ENCODE measurements at regions of chr2 and their contacts with region 1.

Region 1: DNA sequence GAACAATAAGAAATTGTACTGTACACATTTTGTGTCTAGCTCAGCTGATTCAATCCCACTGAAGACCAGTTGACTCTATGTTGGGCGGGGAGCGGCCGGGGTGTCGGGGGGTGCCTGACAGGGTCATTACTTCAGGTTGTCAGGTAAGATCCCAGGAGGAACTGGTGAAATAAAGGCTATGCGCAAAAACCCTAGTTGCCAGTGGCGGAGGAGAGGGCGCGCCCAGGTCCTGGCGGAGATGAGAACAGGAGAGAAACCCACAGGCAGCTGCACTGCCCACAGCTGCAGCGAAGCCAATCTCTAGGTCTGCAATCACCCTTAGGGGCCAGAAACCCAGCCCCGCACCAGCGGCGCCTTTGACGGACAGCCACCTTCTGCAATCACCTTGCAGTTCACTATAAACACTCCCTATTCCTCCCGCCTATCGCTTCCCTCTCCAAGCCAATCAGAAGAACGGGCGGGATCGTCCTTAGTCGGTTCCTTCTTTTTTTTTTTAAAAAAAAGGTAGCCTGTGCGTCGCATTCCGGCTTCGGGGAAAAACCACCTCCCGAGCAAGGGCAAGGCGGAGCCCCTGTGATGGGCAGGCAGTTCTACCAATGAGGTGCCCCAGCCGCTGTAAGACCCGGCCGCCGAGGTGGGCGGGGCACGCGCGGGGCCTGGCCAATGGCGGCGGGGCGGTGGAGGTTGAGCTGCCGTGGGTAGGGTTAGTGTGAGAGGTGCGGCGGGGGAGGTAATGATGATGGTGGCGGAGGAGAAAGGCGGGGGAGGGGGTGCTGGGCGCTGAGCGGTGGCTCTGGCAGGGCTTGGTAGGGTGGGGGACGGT is at the start of gene EHBP1:
- H3K4me3 Mint-ChIP-seq: peak within 1 kb of the TSS; percentile 93
- H3K27ac Mint-ChIP-seq: peak within 1 kb of the TSS; percentile 96
- H3K4me1 Mint-ChIP-seq: peaks cover 31% of the 10 kb centered on the region
- H3K27me3 Mint-ChIP-seq: peaks cover 2% of the 10 kb centered on the region

Region 2: GRCh38 chr2:61905372-61906185 is 799.6 kb before region 1 on chr2 and contains the start of gene COMMD1:
- intact Hi-C with region 1: loop called (anchors 5 kb)
- H3K4me3 Mint-ChIP-seq: peak within 1 kb of the TSS; percentile 100
- H3K27ac Mint-ChIP-seq: peak within 1 kb of the TSS; percentile 94
- H3K4me1 Mint-ChIP-seq: peaks cover 7% of the 10 kb centered on the region
- H3K27me3 Mint-ChIP-seq: no peaks in the 10 kb centered on the region

Region 3: DNA sequence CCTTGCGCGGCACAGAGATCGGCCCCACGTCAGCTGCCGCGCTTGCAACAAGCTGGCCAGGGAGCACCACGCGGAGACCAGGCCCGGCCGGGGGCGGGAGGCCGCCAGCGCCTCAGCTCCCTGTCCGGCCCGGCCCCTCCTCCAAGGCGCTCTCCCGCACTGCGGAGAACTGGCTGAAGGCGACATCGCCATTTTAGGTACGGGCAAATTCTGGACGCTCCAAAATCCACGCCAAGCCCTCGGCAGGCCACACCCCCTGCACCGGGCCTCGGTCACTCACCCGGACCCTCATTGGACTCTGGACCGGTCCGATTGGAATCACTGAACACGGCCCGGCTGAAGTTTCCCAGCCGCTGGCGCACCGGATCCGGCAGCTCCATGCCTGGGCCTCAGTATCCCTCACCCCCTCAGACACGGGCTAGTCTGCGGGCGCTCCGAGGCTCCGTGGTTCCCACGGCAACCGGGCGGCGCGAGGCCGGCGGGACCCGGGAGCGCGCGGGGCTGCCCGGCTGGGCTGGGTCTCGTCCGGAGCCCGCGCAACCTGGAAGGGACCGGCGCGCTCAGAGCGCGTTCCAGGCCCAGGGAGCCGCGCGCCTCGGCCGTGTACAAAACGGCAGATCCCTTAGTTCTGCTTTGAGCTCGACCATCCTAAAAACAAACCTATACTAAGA is 199.3 kb before region 1 on chr2 and contains the start of gene TMEM17:
- intact Hi-C with region 1: loop called (anchors 2 kb)
- H3K4me3 Mint-ChIP-seq: peak within 1 kb of the TSS; percentile 83
- H3K27ac Mint-ChIP-seq: peak within 1 kb of the TSS; percentile 82
- H3K4me1 Mint-ChIP-seq: peaks cover 16% of the 10 kb centered on the region
- H3K27me3 Mint-ChIP-seq: no peaks in the 10 kb centered on the region

Region 4: GRCh38 chr2:63588385-63589147 is 883.3 kb after region 1 on chr2 and contains the starts of genes MDH1 and WDPCP:
- intact Hi-C with region 1: loop called (anchors 10 kb)
- H3K4me3 Mint-ChIP-seq: peak within 1 kb of the TSS; percentile 99
- H3K27ac Mint-ChIP-seq: peak within 1 kb of the TSS; percentile 97
- H3K4me1 Mint-ChIP-seq: peaks cover 42% of the 10 kb centered on the region
- H3K27me3 Mint-ChIP-seq: no peaks in the 10 kb centered on the region